HCT116 (cell line): ENCODE measurements at regions of chr9 and their contacts with region 1.

Region 1: DNA sequence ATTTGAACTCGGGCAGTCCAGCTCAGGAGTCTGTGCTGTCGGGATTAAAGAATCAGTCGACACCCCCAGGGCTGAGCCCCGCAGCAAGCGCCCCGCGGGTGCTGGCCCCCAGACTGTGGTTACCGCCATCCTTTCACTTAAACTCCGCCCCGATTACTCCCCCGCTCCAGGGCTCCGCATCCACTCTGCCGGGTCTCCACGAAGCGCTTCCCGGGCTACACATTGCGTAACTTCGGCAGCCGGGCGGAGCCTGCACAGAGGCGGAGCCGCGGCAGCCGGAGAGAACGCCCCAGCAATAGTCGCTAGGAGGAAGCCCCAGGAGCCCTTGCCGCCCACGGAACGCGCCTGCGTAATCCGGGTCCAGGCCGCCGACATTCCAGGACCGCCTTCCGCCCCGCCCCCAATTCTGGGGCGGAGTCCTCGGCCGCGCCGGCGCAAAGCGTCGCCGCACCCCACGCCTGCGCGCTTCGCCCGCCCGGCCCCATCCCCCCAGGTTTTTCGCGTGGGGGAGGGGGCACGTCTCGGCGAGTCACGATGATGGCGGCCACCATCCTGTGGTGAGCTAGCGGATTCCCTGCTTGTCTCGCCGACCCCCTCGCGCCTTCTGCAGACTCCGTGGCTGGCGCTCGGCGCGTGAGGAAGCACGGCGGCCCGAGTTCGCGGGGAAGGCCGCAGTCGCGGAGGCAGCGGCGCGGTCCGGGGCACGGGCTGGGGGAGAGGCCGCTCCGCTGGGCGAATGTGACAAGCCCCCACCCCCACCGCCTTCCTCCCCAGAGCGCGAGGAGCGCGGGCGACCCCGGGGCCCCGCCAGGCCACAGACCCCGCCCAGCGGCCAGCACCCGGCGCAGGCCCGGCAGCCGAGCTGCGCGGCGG is at the start of gene RAD23B:
- DNase-seq: peak; percentile 94
- ATAC-seq: peak; percentile 87
- H3K4me3 ChIP-seq: peak within 1 kb of the TSS; percentile 83 to 95
- H3K27ac ChIP-seq: peak within 1 kb of the TSS; percentile 99
- H3K4me1 ChIP-seq: peaks cover 47 to 66% of the 10 kb centered on the region in 2 experiments
- H3K27me3 ChIP-seq: no peaks in the 10 kb centered on the region
- CTCF ChIP-seq: no peak
- POLR2A ChIP-seq: no peak
- RAD21 ChIP-seq: no peak
- total RNA-seq, gene RAD23B: 251 TPM

Region 2: GRCh38 chr9:107213561-107214028 is 69.4 kb before region 1 on chr9:
- CTCF ChIA-PET with region 1: no interaction called
- POLR2A ChIA-PET with region 1: no interaction called
- RAD21 ChIA-PET with region 1: no interaction called
- intact Hi-C with region 1: loop called (anchors 2 kb)
- DNase-seq: peak; percentile 96
- ATAC-seq: peak; percentile 79
- H3K4me3 ChIP-seq: peak overlapping the region; percentile 14 to 37; a peak in 3 of 4 replicates
- H3K27ac ChIP-seq: peak overlapping the region; percentile 94
- H3K4me1 ChIP-seq: peaks cover 59 to 80% of the 10 kb centered on the region in 2 experiments
- H3K27me3 ChIP-seq: no peaks in the 10 kb centered on the region
- CTCF ChIP-seq: no peak
- POLR2A ChIP-seq: peak; percentile 50
- RAD21 ChIP-seq: no peak

Region 3: GRCh38 chr9:107243751-107244150 is 39.2 kb before region 1 on chr9:
- CTCF ChIA-PET with region 1: no interaction called
- POLR2A ChIA-PET with region 1: interaction called, 3 read pairs
- RAD21 ChIA-PET with region 1: no interaction called
- intact Hi-C with region 1: loop called (anchors 1 kb)
- DNase-seq: peak; percentile 99
- ATAC-seq: peak; percentile 79
- H3K4me3 ChIP-seq: peak overlapping the region in 1 of 2 experiments; percentile 38; a peak in 2 of 4 replicates
- H3K27ac ChIP-seq: peak overlapping the region; percentile 96
- H3K4me1 ChIP-seq: peaks cover 79 to 98% of the 10 kb centered on the region in 2 experiments
- H3K27me3 ChIP-seq: no peaks in the 10 kb centered on the region
- CTCF ChIP-seq: no peak
- POLR2A ChIP-seq: no peak
- RAD21 ChIP-seq: peak; percentile 48

Region 4: GRCh38 chr9:107323836-107324585 is 41.0 kb after region 1 on chr9:
- CTCF ChIA-PET with region 1: no interaction called
- POLR2A ChIA-PET with region 1: no interaction called
- RAD21 ChIA-PET with region 1: no interaction called
- intact Hi-C with region 1: loop called (anchors 5 kb)
- DNase-seq: no peak
- ATAC-seq: no peak
- H3K4me3 ChIP-seq: no peak overlapping the region
- H3K27ac ChIP-seq: no peak overlapping the region
- H3K4me1 ChIP-seq: no peaks in the 10 kb centered on the region
- H3K27me3 ChIP-seq: no peaks in the 10 kb centered on the region
- CTCF ChIP-seq: no peak
- POLR2A ChIP-seq: no peak
- RAD21 ChIP-seq: no peak

Region 5: DNA sequence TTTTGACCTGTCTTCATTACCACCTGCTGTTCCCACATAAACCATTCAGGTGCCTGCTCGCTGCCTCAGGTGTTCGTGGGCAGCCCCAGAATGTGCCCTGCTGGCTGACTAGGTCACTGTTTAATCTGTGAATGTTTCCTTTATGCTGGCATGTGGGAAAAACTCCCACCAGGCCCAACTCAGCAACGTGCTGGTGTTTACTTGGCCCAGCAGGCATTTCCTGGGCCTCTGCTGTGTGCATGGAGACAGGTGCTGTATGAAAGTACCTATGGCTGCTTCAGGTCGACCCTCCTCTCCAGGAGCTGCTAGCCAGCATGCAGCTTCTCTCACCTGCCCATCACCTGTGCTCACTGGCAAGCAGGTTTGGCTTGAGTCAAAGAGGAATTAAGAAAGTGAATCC is 65.8 kb after region 1 on chr9:
- CTCF ChIA-PET with region 1: no interaction called
- POLR2A ChIA-PET with region 1: no interaction called
- RAD21 ChIA-PET with region 1: no interaction called
- intact Hi-C with region 1: no loop called
- DNase-seq: no peak
- ATAC-seq: peak; percentile 21
- H3K4me3 ChIP-seq: no peak overlapping the region
- H3K27ac ChIP-seq: no peak overlapping the region
- H3K4me1 ChIP-seq: peaks cover 3 to 18% of the 10 kb centered on the region in 2 experiments; a peak in 3 of 4 replicates
- H3K27me3 ChIP-seq: no peaks in the 10 kb centered on the region
- CTCF ChIP-seq: no peak
- POLR2A ChIP-seq: no peak
- RAD21 ChIP-seq: no peak